Activated CD4-positive, alpha-beta T cell treated with anti-CD3 and anti-CD28 coated beads for 36 hours (primary cell): ENCODE measurements at regions of chr1 and their contacts with region 1.

Region 1: GRCh38 chr1:36385410-36386257 is at the start of gene STK40:
- DNase-seq: peak; percentile 99
- ATAC-seq: peak; percentile 88
- H3K4me3 Mint-ChIP-seq: peak within 1 kb of the TSS; percentile 81
- H3K27ac Mint-ChIP-seq: peak within 1 kb of the TSS; percentile 100
- H3K4me1 Mint-ChIP-seq: peaks cover 58% of the 10 kb centered on the region
- H3K27me3 Mint-ChIP-seq: no peaks in the 10 kb centered on the region
- total RNA-seq, gene STK40: 38.8 to 51.3 TPM

Region 2: GRCh38 chr1:35930593-35931445 is 454.8 kb before region 1 on chr1 and contains the start of gene AGO3:
- CTCF ChIA-PET with region 1: no interaction called
- POLR2A ChIA-PET with region 1: interaction called, 3 read pairs
- intact Hi-C with region 1: loop called in 1 of 2 experiments (anchors 1 kb)
- DNase-seq: peak; percentile 95
- ATAC-seq: peak; percentile 95
- H3K4me3 Mint-ChIP-seq: peak within 1 kb of the TSS; percentile 92
- H3K27ac Mint-ChIP-seq: peak within 1 kb of the TSS; percentile 94
- H3K4me1 Mint-ChIP-seq: peaks cover 37% of the 10 kb centered on the region
- H3K27me3 Mint-ChIP-seq: no peaks in the 10 kb centered on the region
- total RNA-seq, gene AGO3: 23.3 to 33.8 TPM

Region 3: DNA sequence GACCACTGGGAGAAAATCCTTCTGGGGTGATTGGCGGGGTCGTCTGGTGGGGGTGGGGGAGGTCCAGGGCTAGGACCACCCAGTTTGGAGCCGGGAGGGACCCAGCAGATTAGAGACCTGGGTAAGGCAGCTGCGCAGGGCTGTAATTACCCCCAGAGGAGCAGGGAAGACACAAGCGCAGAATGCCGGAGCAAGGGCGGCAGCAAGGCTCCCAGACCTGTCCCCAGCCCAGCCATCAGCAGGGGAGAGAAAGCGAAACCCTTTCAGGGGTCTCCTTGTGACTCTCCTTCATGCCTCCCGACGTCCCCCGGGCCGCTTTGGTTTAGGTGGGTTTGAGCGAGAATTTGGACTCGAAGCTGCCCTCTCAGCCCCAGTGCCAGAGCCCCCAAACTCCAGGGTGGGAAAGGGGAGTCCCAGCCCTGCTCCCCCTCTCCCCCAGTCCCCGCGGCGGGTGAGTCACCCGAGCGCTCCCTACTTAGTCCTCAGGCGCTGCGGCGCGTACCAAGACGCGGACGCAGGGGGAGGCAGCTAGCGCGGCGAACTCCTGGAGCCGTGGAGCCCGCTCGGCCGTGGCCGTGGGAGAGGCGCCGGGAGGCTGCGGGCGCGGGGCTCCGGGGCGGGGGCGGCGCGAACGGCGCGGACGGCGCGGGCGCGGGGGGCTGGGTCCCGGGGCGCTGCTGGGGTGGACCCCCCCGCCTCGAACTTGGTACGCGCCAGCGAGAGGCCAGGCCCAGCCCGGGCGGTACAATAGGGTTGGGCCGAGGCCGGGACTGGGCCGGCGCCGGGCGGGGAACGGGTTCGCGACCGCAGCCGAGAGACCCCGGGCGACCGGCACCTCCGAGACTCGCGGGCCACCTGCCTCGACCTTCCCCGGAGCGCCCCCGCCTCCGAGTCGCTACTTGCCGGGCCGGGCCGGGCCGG is 230.0 kb before region 1 on chr1 and contains the start of gene MAP7D1:
- CTCF ChIA-PET with region 1: no interaction called
- POLR2A ChIA-PET with region 1: interaction called, 3 read pairs
- intact Hi-C with region 1: loop called in 1 of 2 experiments (anchors 1 kb)
- DNase-seq: peak; percentile 92
- ATAC-seq: peak; percentile 57
- H3K4me3 Mint-ChIP-seq: peak within 1 kb of the TSS; percentile 88
- H3K27ac Mint-ChIP-seq: peak within 1 kb of the TSS; percentile 90
- H3K4me1 Mint-ChIP-seq: peaks cover 68% of the 10 kb centered on the region
- H3K27me3 Mint-ChIP-seq: no peaks in the 10 kb centered on the region
- total RNA-seq, gene MAP7D1: 122 to 133 TPM

Region 4: GRCh38 chr1:36306902-36307456 is 78.7 kb before region 1 on chr1:
- CTCF ChIA-PET with region 1: no interaction called
- POLR2A ChIA-PET with region 1: no interaction called
- intact Hi-C with region 1: loop called in 1 of 2 experiments (anchors 1 kb)
- DNase-seq: peak; percentile 96
- ATAC-seq: peak; percentile 91
- H3K4me3 Mint-ChIP-seq: peak overlapping the region; percentile 98
- H3K27ac Mint-ChIP-seq: peak overlapping the region; percentile 96
- H3K4me1 Mint-ChIP-seq: peaks cover 45% of the 10 kb centered on the region
- H3K27me3 Mint-ChIP-seq: no peaks in the 10 kb centered on the region

Region 5: DNA sequence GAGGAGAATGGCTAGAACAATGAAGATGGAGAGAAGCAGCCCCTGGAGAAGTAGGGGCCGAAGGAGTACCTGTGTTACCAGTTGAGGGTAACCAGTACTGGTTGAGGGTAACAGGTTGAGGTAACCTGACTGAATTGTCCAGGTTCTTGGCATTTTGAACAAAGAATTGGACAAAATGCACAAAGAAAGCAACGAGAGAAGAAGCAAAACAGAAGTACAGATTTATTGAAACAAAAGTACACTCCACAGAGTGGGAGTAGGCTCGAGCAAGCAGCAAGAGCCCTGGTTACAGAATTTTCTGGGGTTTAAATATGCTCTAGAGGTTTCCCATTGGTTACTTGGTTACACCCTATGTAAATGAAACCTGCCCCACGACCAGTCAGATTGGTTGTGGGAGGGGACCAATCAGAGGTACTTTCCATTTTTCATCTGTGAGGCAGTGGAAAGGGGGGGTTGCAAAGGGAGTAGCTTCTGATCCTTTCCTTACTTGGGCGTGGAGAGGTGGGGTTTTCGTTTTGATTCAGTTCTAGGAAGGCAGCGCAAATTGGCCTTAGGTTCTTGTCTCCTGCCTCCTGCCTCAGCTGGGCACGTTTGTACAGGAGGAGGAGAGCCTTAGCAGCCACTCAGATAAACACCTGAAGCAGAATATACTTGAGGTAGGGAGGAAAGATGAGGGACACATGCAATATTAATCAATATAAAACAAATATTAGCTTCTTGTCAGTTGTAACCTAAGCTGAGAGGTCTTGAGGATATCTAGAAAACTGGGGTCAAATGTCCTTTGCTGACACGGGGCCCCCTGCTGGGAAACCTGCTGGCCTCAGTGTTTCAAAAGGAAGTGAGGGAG is 26.3 kb after region 1 on chr1:
- CTCF ChIA-PET with region 1: interaction called, 7 read pairs
- POLR2A ChIA-PET with region 1: interaction called, 10 read pairs
- intact Hi-C with region 1: loop called (anchors 1 kb)
- DNase-seq: peak; percentile 82
- ATAC-seq: peak; percentile 98
- H3K4me3 Mint-ChIP-seq: peak overlapping the region; percentile 44
- H3K27ac Mint-ChIP-seq: peak overlapping the region; percentile 91
- H3K4me1 Mint-ChIP-seq: peaks cover 21% of the 10 kb centered on the region
- H3K27me3 Mint-ChIP-seq: no peaks in the 10 kb centered on the region

Region 6: DNA sequence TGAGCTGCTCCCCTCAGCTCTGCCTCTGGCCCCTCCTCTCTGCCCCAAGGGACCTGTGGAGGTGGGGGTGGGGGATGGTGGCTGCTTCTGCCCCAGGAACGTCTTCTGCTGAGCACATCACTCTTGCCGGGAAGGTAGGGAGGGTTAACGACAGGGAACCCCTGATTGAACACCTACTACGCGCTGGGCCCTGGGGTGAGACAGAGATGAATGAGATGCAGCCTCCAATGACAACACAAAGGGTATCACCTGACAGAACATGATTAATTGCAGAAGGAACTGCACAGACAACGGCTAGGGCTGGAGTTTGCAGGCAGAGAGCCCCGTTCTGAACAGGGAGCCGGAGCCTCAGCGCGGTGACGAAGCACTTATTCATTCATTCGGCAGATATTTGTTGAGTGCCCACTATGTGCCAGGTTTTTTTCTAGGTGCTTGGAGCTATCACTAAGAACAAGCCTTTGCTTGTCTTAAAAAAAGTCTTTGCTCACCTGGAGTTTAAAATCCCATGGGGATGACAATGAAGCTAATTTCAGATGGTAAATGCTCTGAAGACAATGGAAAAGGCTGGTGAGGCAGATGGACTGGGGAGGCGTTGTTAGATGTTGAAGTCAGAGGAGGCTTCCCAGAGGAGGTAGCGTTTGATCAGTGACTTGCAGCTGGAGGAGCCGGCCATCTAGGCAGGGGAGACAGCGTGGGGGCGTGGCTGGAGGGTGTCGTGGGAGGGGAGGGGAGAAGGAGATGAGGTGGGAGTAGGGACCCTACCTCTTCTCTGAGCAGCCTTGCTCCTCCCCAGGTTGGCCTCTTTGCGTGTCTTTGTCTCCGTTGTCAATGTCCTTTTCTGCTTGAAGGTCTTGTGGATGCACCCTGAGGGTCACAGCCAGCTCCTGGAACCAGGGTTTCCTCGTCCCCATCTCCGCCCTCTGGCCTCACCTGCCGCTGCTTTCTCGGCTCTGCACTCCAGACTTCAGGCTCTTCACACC is 200.2 kb after region 1 on chr1:
- CTCF ChIA-PET with region 1: no interaction called
- POLR2A ChIA-PET with region 1: no interaction called
- intact Hi-C with region 1: no loop called
- DNase-seq: no peak
- ATAC-seq: no peak
- H3K4me3 Mint-ChIP-seq: no peak overlapping the region
- H3K27ac Mint-ChIP-seq: no peak overlapping the region
- H3K4me1 Mint-ChIP-seq: no peaks in the 10 kb centered on the region
- H3K27me3 Mint-ChIP-seq: peaks cover 19% of the 10 kb centered on the region

Region 7: DNA sequence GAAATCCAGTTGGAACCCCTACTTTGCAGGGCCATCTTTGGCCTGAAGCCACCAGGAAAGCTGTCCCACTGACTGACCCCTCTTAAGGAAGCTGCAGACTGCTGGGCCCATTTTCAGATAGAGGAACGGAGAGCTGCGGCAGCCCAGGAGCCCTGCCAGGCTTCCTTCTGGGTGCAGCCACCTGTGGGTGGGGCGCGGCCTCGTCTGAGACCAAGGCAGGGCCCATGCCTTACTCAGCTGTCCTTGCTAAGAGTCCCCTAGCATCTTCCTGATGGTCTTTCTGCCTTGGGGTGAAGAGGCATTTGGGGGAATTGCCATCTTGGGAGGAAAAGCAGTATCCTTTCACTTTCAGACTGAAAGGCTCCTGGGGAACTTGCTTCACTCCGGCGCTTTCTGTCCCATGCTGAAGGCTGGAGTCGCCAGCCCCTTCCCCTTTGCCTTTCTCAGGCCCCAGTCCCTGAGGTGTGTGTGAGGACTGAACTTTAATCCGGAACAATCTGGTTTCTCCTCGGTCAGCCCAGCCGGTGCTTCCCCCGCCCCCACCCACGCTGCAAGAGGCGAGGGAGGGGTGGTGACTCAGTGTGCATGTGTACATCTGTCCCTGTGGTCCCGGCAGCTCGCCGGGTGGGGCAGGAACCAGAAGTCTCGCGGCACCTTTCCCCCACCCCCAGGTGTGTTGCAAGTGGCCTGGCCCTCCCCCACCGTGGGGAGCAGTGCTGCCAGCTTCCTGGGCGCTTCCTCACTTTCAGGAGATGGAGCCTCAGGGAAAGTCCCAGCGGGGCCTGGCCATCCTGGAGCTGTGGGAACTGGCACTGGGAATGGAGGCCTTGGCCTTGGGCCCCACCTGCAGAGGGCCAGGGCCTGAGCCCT is 1093.9 kb after region 1 on chr1:
- CTCF ChIA-PET with region 1: no interaction called
- POLR2A ChIA-PET with region 1: no interaction called
- intact Hi-C with region 1: loop called (anchors 1 to 5 kb)
- DNase-seq: peak; percentile 96
- ATAC-seq: peak; percentile 52
- H3K4me3 Mint-ChIP-seq: peak overlapping the region; percentile 95
- H3K27ac Mint-ChIP-seq: peak overlapping the region; percentile 98
- H3K4me1 Mint-ChIP-seq: peaks cover 32% of the 10 kb centered on the region
- H3K27me3 Mint-ChIP-seq: no peaks in the 10 kb centered on the region